ENCODE measurements at regions of chr7 and their contacts with region 1.

Region 1: GRCh38 chr7:28096713-28097112 is 83.9 kb downstream of the JAZF1 start:
- DNase-seq: peak in 8 of 10 donors; percentile 34 to 89 (median 56)

Region 2: DNA sequence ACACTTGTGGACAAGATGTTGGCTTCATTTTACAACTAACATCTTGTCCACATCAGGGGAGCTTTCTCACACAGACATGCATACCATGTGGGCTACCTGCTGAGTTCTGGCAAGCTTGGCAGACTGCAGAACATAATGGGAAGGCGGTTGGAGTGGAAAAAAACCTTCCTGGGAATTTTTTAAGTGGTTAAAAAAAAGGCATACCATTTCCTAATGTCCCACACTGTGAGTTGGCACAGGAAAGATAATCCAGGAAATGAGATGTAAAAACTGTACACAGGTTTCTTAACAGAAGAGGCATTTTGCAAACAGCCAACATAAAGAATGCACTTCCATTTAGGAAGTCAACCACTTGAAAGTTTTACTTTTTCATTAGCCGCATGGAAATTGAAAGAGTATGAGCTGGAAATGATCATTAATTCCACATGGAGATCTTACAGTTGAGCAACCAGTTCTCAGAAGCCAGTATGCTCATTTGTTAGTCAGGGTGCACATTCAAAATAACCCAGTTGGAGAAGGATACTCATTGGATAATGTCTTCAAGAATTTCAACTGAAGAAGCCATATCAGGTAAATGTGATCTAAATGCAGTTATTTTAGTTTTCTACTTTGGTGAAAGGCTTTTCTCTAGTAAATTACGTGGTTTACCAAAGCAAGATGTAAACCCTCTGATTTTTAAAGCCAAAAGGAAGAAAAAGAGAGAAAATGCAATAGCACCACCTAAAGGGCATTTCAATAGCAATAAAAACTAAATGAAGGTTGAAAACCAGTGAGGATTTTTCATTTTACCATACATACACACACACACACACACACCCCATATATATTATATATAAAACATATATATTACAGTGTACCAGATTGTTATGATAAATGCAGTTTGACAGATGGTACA is 162.8 kb before region 1 on chr7:
- intact Hi-C with region 1: loop called (anchors 10 kb)
- DNase-seq: no peak

Region 3: DNA sequence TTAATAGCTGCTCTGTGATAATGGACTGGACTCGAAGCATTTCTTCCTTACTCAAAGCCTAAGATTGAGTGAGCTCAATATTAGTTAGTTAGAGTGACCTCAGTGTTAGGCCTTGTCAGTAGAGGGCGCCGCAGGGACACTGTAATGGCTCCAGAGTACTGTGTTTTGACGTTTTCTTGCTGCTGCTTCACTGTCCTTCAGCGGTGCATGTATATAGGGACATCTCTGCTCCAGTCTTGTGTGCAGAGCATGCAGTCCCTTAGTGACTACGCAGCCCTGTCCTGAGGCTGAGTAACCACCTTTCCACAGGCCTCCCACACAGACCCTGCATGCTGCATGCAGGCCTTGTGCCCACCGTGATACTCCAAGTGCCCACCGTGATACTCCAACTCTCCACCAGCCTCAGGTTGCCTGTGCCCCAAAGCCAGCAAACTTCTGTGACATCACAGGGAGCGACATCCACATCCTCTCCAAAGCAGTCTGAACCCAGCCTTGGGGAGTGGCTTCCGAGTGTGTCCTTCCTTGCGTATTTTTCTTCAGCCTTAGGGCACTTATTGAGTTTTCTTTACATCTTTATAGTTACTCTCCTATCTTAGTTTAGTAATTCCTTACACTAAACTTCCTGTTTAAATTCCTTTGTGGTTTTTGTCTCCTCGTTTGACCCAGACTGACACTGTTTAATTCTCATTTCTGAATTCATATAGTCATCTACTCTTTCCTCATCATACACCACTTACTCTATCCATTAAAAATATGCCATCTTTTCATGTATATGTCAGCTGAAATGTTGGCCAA is 34.3 kb before region 1 on chr7:
- intact Hi-C with region 1: loop called (anchors 1 kb)
- DNase-seq: peak in 6 of 10 donors; percentile 29 to 92 (median 62)

Measured in posterior cingulate gyrus (tissue), 11 donors.